ENCODE measurements at regions of chr22 and their contacts with region 1.

Region 1: GRCh38 chr22:25546751-25547150 is 17.7 kb upstream of the GRK3 start:
- DNase-seq: no peak
- ATAC-seq: peak; percentile 80
- H3K4me3 ChIP-seq: no peak overlapping the region
- H3K27ac ChIP-seq: no peak overlapping the region
- H3K4me1 ChIP-seq: no peaks in the 10 kb centered on the region; the same call in 1 of the 2 replicates
- H3K27me3 ChIP-seq: no peaks in the 10 kb centered on the region
- CTCF ChIP-seq: no peak
- EP300 ChIP-seq: no peak
- POLR2A ChIP-seq: no peak
- RAD21 ChIP-seq: no peak

Region 2: GRCh38 chr22:25219948-25220442 is 326.8 kb before region 1 on chr22:
- CTCF ChIA-PET with region 1: no interaction called
- POLR2A ChIA-PET with region 1: no interaction called
- RAD21 ChIA-PET with region 1: no interaction called
- SMC1A ChIA-PET with region 1: no interaction called
- in situ Hi-C with region 1: no loop called
- intact Hi-C with region 1: no loop called
- DNase-seq: no peak
- ATAC-seq: no peak
- H3K4me3 ChIP-seq: no peak overlapping the region
- H3K27ac ChIP-seq: no peak overlapping the region
- H3K4me1 ChIP-seq: no peaks in the 10 kb centered on the region
- H3K27me3 ChIP-seq: no peaks in the 10 kb centered on the region; a peak in 1 of 4 replicates
- CTCF ChIP-seq: no peak
- EP300 ChIP-seq: no peak
- POLR2A ChIP-seq: no peak
- RAD21 ChIP-seq: no peak

Region 3: GRCh38 chr22:25465949-25466348 is 80.8 kb before region 1 on chr22:
- CTCF ChIA-PET with region 1: interaction called, 44 read pairs
- POLR2A ChIA-PET with region 1: no interaction called
- RAD21 ChIA-PET with region 1: interaction called, 23 read pairs
- SMC1A ChIA-PET with region 1: interaction called, 12 read pairs
- in situ Hi-C with region 1: no loop called
- intact Hi-C with region 1: loop called (anchors 5 kb)
- DNase-seq: no peak
- ATAC-seq: no peak
- H3K4me3 ChIP-seq: no peak overlapping the region
- H3K27ac ChIP-seq: no peak overlapping the region
- H3K4me1 ChIP-seq: no peaks in the 10 kb centered on the region
- H3K27me3 ChIP-seq: no peaks in the 10 kb centered on the region
- CTCF ChIP-seq: no peak
- EP300 ChIP-seq: no peak
- POLR2A ChIP-seq: no peak
- RAD21 ChIP-seq: no peak

Region 4: DNA sequence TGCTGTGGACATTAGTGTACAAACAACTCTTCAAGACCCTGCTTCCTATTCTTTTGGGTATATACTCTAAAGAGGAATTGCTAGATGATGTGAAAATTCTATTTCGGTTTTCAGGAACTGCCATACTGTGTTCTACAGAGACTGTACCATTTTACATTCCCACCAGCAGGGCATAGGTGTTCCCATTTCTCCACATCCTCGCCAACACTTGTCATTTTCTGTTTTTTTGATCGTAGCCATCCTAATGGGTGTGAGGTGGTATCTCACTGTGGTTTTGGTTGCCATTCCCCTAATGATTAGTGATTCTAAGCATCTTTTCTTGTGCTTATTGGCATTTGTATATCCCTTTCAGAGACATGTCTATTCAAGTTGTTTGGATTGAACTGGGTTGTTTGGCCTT is 12.0 kb before region 1 on chr22:
- CTCF ChIA-PET with region 1: interaction called, 12 read pairs
- POLR2A ChIA-PET with region 1: no interaction called
- RAD21 ChIA-PET with region 1: no interaction called
- SMC1A ChIA-PET with region 1: interaction called, 5 read pairs
- in situ Hi-C with region 1: no loop called
- intact Hi-C with region 1: no loop called
- DNase-seq: no peak
- ATAC-seq: no peak
- H3K4me3 ChIP-seq: no peak overlapping the region
- H3K27ac ChIP-seq: no peak overlapping the region
- H3K4me1 ChIP-seq: no peaks in the 10 kb centered on the region
- H3K27me3 ChIP-seq: no peaks in the 10 kb centered on the region
- CTCF ChIP-seq: no peak
- EP300 ChIP-seq: no peak
- POLR2A ChIP-seq: no peak
- RAD21 ChIP-seq: no peak

Region 5: GRCh38 chr22:25623310-25623734 is 76.6 kb after region 1 on chr22:
- CTCF ChIA-PET with region 1: interaction called, 8 read pairs
- POLR2A ChIA-PET with region 1: no interaction called
- RAD21 ChIA-PET with region 1: interaction called, 9 read pairs
- SMC1A ChIA-PET with region 1: interaction called, 11 read pairs
- in situ Hi-C with region 1: no loop called
- intact Hi-C with region 1: no loop called
- DNase-seq: peak; percentile 93
- ATAC-seq: peak; percentile 96
- H3K4me3 ChIP-seq: no peak overlapping the region; the same call in 1 of the 2 replicates
- H3K27ac ChIP-seq: peak overlapping the region; percentile 65
- H3K4me1 ChIP-seq: peaks cover 54% of the 10 kb centered on the region
- H3K27me3 ChIP-seq: no peaks in the 10 kb centered on the region
- CTCF ChIP-seq: no peak
- EP300 ChIP-seq: peak; percentile 80 to 85
- POLR2A ChIP-seq: no peak
- RAD21 ChIP-seq: no peak

Region 6: GRCh38 chr22:25680956-25681355 is 134.2 kb after region 1 on chr22:
- CTCF ChIA-PET with region 1: interaction called, 5 read pairs
- POLR2A ChIA-PET with region 1: interaction called, 3 read pairs
- RAD21 ChIA-PET with region 1: interaction called, 3 read pairs
- SMC1A ChIA-PET with region 1: interaction called, 11 read pairs
- in situ Hi-C with region 1: no loop called
- intact Hi-C with region 1: no loop called
- DNase-seq: no peak
- ATAC-seq: no peak
- H3K4me3 ChIP-seq: no peak overlapping the region
- H3K27ac ChIP-seq: no peak overlapping the region
- H3K4me1 ChIP-seq: no peaks in the 10 kb centered on the region
- H3K27me3 ChIP-seq: no peaks in the 10 kb centered on the region
- CTCF ChIP-seq: no peak
- EP300 ChIP-seq: no peak
- POLR2A ChIP-seq: no peak
- RAD21 ChIP-seq: no peak

Region 7: DNA sequence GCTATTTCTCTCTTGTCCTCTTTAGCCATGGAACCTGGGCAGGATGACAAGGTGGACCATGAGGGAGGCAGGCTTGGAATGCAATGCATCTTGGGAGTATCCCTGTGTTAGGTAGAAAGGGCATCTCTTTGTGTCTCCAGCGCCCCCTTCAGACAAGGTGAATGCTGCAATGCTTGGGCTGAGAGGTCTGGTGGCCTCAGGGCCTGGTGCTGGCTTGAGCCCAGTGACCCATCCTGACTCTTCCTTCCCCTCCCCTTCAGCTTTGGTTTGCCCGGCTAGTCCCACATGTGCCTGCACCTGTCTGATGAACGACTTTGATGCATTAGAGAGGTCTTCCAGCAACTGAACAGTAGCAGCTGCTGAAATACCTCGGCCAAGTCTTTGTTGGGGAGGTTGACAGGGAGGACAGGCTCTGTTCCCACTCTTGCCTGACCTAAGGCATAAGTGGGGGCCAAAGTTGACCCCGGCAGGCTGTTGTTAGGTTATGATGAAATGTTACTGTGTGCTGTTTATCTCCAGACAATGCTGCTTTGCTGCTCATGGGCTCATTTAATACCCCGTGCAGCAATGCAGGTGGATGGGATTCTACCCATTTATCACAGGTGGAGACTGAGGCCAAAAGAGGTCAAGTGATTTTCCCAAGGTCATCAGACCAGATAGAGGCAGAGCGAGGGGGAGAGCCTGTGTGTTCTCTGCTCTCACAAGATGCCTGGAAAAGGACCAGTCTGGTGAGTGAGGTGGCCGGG is 217.7 kb after region 1 on chr22:
- CTCF ChIA-PET with region 1: interaction called, 10 read pairs
- POLR2A ChIA-PET with region 1: interaction called, 4 read pairs
- RAD21 ChIA-PET with region 1: interaction called, 3 read pairs
- SMC1A ChIA-PET with region 1: interaction called, 3 read pairs
- in situ Hi-C with region 1: no loop called
- intact Hi-C with region 1: no loop called
- DNase-seq: no peak
- ATAC-seq: no peak
- H3K4me3 ChIP-seq: no peak overlapping the region
- H3K27ac ChIP-seq: no peak overlapping the region
- H3K4me1 ChIP-seq: 0 out of 2 replicates have a peak, but pooled peaks cover 1% of the 10 kb centered on the region
- H3K27me3 ChIP-seq: no peaks in the 10 kb centered on the region
- CTCF ChIP-seq: no peak
- EP300 ChIP-seq: no peak
- POLR2A ChIP-seq: no peak
- RAD21 ChIP-seq: no peak

Region 8: DNA sequence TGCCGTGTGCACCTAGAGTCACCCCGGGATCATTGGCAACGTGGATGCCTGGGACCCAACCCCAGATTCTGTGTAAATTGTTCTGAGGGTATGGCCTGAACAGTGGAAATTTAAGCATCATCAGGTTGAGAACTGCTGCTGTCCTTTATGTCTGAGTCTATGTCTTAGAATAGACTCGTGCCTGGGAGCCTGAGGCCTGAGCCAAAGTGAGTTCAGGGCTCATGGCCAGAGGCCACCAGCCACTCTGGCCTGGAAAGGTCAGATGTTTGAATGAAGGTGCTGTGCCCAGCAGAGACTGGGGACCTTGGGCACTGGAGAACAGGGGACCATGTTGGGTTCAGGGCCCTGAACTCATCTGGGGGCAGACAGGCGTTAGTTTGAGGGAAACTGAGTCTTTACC is 286.3 kb after region 1 on chr22:
- CTCF ChIA-PET with region 1: no interaction called
- POLR2A ChIA-PET with region 1: no interaction called
- RAD21 ChIA-PET with region 1: no interaction called
- SMC1A ChIA-PET with region 1: no interaction called
- in situ Hi-C with region 1: no loop called
- intact Hi-C with region 1: no loop called
- DNase-seq: no peak
- ATAC-seq: no peak
- H3K4me3 ChIP-seq: no peak overlapping the region
- H3K27ac ChIP-seq: no peak overlapping the region
- H3K4me1 ChIP-seq: peaks cover 16% of the 10 kb centered on the region
- H3K27me3 ChIP-seq: no peaks in the 10 kb centered on the region
- CTCF ChIP-seq: no peak
- EP300 ChIP-seq: no peak
- POLR2A ChIP-seq: no peak
- RAD21 ChIP-seq: no peak